ENCODE measurements at regions of chr3 and their contacts with region 1.

Region 1: GRCh38 chr3:187679638-187680396 is 9.6 kb upstream of the SST start:
- DNase-seq: peak; percentile 90

Region 2: GRCh38 chr3:187319699-187320302 is 360.0 kb before region 1 on chr3:
- in situ Hi-C with region 1: loop called (anchors 25 kb)
- DNase-seq: peak; percentile 89

Region 3: DNA sequence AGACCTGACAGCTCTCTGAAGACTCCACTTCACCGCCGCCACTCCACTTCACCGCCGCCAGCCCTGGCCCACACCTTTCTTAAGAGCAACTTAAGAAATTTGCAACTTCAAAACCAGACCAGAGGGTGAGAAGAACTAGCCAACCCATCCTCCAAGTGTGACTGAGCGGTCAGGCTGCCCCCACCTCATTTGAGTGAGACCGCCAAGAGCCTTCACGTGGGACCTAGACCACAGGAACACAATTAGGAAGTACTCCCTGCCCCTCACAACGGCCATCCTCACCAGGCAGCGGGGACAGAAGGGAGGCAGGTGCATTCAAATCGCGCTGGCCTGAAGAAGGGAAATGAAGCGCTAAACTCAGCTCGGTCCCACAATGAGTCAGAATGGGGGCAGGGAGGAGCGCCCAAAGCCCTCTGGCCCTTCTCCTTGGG is 222.2 kb after region 1 on chr3:
- in situ Hi-C with region 1: no loop called
- DNase-seq: no peak